Sigmoid colon (tissue), 7 donors: ENCODE measurements at regions of chr1 and their contacts with region 1.

Region 1: GRCh38 chr1:44792783-44793714 is 5.1 kb upstream of the BEST4 start:
- DNase-seq: peak; percentile 49
- H3K4me3 ChIP-seq: no peak overlapping the region
- H3K27ac ChIP-seq: no peak overlapping the region
- H3K4me1 ChIP-seq: peaks cover 0 to under 1% (median 0%) of the 10 kb centered on the region in 4 donors
- H3K27me3 ChIP-seq: no peaks in the 10 kb centered on the region
- CTCF ChIP-seq: no peak
- EP300 ChIP-seq: no peak
- POLR2A ChIP-seq: no peak

Region 2: DNA sequence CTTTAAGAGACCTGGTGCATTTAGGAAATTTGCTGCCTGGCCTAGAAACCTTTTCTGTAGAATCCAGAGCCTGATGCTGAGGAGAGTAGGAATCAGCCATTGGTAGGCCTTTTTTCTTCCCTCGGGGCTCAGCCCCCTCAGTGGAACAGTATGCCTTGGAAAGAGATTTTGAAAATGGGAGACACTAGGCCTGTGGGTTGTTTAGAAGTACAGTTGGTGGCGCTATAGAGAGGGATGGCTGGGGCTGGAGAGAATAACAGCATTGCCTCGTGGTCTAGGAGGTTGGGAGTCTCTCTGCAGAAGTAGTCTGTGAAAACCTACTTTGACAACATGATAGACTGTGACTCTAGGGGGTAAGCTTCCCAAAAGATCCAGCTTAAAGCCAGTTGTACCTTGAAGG is 45.2 kb before region 1 on chr1:
- intact Hi-C with region 1: no loop called
- DNase-seq: no peak
- H3K4me3 ChIP-seq: no peak overlapping the region
- H3K27ac ChIP-seq: no peak overlapping the region
- H3K4me1 ChIP-seq: no peaks in the 10 kb centered on the region
- H3K27me3 ChIP-seq: no peaks in the 10 kb centered on the region
- CTCF ChIP-seq: no peak
- EP300 ChIP-seq: no peak
- POLR2A ChIP-seq: no peak

Region 3: DNA sequence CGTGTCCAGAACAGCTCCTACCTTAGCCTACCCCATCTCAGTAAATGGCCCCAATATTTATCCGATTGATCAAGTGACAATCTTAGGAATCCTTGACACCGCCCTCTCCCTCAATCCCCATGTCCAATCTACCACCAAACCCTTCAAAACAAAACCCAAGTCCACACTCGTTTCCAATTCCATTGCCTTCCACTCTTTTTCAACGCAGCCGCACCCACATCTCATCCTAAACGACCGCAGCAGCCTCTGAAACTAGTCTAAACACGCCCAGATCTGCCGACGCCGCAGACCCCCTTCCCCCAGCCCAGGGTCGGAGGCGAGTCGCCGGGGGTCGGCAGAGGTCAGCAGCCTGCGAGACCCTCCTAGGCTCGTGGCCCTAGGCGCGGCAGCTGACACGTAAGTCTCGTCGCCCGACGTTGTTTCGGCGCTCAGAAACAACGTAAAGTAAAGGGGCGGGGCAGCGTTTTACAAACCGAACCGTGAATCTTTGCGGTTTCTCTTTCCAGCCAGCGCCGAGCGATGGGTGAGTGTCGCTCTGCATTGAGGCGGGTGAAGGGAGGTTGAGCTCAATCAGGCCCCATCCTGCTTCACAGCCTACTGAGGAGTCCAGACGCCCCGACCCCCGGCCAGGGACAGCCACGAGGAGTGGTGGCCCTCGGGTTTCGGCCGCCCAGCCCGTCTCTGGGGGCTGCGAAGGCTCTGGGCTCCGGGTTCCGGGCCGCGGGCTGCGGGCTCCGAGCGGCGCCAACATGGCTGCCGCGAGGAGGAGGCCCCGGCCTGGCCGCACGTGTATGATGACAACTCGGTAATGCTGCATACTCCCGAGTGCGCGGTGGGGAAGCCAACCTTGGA is 17.7 kb before region 1 on chr1 and contains the start of gene RPS8:
- intact Hi-C with region 1: no loop called
- DNase-seq: peak; percentile 96
- H3K4me3 ChIP-seq: peak within 1 kb of the TSS; percentile 74 to 91 (median 81)
- H3K27ac ChIP-seq: peak within 1 kb of the TSS; percentile 98 to 99 (median 98)
- H3K4me1 ChIP-seq: peaks cover 0 to 37% (median 26%) of the 10 kb centered on the region in 4 donors
- H3K27me3 ChIP-seq: no peaks in the 10 kb centered on the region
- CTCF ChIP-seq: no peak
- EP300 ChIP-seq: peak in 2 of 4 donors; percentile 23 to 74
- POLR2A ChIP-seq: peak; percentile 94 to 97
- total RNA-seq, gene RPS8: 2,554 to 3,717 (median 3,009) TPM

Region 4: GRCh38 chr1:44835738-44836675 is 43.0 kb after region 1 on chr1:
- intact Hi-C with region 1: loop called (anchors 5 kb)
- DNase-seq: peak; percentile 87
- H3K4me3 ChIP-seq: no peak overlapping the region
- H3K27ac ChIP-seq: no peak overlapping the region
- H3K4me1 ChIP-seq: peaks cover 0 to 7% (median 4%) of the 10 kb centered on the region in 4 donors
- H3K27me3 ChIP-seq: no peaks in the 10 kb centered on the region
- CTCF ChIP-seq: peak; percentile 58 to 76 (median 70)
- EP300 ChIP-seq: no peak
- POLR2A ChIP-seq: no peak

Region 5: DNA sequence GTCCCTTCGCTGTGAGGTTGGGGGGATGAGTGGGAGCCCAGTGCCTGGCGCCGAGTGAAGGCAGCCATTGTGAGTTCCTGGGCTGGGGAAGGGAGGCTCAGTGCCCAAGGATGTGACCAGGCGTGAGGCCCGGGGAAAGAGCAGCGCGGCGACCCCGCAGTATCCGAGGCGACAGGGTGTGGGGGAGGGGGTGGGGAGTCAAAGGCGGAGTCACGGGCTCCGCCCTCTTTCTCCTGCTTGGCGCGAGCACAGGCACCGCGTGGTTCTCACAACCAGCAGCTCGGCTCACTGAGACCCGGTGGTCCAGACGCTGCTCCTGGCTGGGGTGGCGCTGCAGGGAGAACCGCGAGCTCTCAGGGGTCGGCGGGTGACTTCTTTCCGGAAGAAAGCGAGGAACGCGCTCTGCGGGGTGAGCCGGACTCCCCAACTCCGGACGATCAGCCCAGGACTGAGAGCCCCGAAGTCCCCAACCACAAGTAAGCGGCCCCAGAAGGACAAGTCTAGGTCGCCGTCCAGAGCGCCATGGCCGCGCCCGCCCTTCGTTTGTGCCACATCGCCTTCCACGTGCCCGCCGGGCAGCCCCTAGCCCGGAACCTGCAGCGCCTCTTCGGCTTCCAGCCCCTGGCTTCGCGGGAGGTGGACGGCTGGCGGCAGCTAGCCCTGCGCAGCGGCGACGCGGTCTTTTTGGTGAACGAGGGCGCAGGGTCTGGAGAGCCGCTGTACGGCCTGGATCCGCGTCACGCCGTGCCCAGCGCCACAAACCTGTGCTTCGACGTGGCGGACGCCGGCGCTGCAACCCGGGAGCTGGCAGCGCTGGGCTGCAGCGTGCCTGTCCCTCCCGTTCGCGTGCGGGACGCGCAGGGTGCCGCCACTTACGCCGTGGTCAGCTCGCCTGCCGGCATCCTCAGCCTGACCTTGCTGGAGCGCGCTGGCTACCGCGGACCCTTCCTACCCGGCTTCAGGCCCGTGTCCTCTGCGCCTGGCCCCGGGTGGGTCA is 533.9 kb after region 1 on chr1 and contains the start of gene HPDL:
- intact Hi-C with region 1: no loop called
- DNase-seq: peak; percentile 84
- H3K4me3 ChIP-seq: peak within 1 kb of the TSS; percentile 38 to 57 (median 52)
- H3K27ac ChIP-seq: peak within 1 kb of the TSS in 2 of 4 donors; percentile 9 to 44
- H3K4me1 ChIP-seq: peaks cover 0 to 17% (median 15%) of the 10 kb centered on the region in 4 donors
- H3K27me3 ChIP-seq: peaks cover 0 to 7% (median 0%) of the 10 kb centered on the region in 3 donors
- CTCF ChIP-seq: no peak
- EP300 ChIP-seq: no peak
- POLR2A ChIP-seq: no peak
- total RNA-seq, gene HPDL: 0.95 TPM in 1 of 4 donors, not detected in the others